AG04449 (cell line): ENCODE measurements at regions of chr17 and their contacts with region 1.

Region 1: DNA sequence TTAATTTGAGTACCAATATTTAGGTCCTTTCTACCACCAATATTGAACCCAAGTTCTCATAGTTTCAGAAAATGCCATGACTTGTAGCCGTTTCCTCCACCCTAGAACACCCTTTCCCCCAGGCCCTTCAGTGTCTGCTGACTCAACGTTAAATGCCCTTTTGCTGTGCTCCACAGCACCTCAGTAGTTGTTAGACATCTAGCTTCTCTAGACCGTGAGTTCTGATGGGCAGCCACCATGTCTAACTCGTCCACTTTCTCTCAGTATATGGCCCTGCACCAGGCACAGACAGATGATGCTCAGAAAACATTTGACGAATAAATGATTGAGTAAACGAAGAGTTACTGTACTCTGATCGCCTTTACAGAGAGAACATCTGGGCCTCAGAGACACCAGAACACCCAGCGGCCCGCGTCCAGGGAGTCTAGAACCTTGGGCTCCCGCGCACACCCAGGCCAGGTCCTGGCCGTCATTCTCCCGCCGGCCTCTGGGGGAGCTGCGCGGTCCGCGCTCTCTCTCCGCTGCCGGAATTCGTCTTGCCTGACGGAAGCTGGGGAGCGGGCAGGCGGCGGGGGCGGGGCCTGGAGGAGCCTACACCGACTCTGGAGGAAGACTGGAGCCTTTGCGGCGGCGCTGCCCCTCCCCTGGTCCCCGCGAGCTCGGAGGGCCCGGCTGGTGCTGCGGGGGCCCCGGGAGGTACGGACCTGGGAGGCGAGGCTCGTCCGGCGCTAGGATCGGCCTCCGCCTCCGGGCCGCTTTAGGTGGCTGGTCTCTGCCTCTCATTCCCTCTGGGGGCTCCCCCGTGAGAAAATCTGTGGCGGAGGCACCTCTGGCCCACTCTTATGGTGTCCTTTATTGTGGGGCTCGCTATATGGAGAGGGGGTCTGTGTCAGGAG is at the start of gene NKIRAS2:
- DNase-seq: no peak
- H3K4me3 ChIP-seq: peak within 1 kb of the TSS; percentile 79
- CTCF ChIP-seq: peak; percentile 97

Region 2: GRCh38 chr17:41930009-41930832 is 89.5 kb before region 1 on chr17 and contains the start of gene ODAD4:
- CTCF ChIA-PET with region 1: no interaction called
- POLR2A ChIA-PET with region 1: no interaction called
- DNase-seq: peak; percentile 73
- H3K4me3 ChIP-seq: peak within 1 kb of the TSS; percentile 72
- CTCF ChIP-seq: peak; percentile 52

Region 3: DNA sequence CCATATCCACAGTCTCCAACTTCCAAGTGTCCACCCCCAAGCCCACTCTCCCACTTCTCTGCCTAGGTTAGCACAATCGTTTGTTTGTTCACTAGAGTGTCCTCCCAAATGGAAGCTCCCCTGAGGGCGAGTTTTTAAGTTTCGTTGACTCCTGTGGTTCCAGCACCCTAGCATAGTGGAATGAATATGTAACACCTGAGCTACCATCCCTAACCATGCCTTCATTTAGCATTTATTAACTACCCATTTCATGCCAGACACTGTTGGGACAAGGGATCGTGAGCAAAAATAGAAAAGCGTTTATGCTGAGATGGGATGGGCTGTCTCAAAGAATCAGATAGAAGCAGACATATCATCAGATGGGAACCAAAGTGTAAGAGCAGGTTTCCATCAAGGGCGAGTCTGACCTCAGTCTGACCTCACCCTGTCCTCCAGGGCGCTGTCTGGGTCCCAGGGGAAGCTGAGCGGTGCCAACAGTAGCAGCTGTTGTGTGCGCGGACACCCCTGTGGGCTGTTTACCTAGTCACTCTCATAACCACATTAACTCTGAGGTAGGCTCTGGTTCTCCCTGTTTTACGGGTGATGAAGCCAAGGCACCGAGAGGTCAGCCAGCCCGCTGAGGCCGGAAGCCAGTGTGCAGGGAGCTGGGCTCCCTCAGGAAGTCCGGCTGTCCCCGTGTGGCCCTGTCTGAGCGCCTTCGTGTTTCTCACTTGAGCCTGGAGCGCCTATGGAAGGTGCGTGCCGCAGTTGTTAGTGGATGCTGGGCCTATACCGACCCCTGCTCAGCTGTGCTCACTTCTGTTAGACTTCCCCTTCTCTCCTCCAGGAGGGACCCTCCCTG is 47.0 kb before region 1 on chr17:
- CTCF ChIA-PET with region 1: interaction called, 46 read pairs
- POLR2A ChIA-PET with region 1: interaction called, 15 read pairs
- DNase-seq: no peak
- H3K4me3 ChIP-seq: no peak overlapping the region
- CTCF ChIP-seq: no peak

Region 4: DNA sequence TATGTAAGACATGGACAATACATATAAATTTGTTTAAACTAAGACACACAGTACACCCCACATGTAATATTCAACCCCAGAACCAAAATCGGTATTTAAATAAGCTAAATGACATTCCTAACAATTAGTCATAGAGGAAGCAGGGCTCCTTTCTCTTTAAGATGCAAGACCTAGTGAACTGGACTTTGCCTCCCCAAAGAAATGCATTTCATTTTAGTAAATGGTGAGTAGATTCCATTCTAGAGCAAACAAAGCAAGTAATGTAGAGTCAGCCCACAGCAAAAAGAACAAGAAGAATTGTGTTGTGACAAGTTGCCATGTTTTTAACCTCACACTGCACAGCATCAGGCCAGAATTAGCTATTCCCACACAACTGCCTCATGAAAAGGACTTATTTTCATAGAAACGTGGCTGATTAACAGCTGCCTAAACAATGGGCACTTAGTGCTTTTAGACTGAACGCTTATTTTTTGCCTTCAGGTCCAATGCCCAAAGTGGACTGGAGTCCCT is 16.9 kb before region 1 on chr17:
- CTCF ChIA-PET with region 1: interaction called, 22 read pairs
- POLR2A ChIA-PET with region 1: no interaction called
- DNase-seq: no peak
- H3K4me3 ChIP-seq: no peak overlapping the region
- CTCF ChIP-seq: no peak

Region 5: GRCh38 chr17:42034059-42034458 is 14.3 kb after region 1 on chr17:
- CTCF ChIA-PET with region 1: interaction called, 83 read pairs
- POLR2A ChIA-PET with region 1: interaction called, 3 read pairs
- DNase-seq: no peak
- H3K4me3 ChIP-seq: no peak overlapping the region
- CTCF ChIP-seq: no peak

Region 6: DNA sequence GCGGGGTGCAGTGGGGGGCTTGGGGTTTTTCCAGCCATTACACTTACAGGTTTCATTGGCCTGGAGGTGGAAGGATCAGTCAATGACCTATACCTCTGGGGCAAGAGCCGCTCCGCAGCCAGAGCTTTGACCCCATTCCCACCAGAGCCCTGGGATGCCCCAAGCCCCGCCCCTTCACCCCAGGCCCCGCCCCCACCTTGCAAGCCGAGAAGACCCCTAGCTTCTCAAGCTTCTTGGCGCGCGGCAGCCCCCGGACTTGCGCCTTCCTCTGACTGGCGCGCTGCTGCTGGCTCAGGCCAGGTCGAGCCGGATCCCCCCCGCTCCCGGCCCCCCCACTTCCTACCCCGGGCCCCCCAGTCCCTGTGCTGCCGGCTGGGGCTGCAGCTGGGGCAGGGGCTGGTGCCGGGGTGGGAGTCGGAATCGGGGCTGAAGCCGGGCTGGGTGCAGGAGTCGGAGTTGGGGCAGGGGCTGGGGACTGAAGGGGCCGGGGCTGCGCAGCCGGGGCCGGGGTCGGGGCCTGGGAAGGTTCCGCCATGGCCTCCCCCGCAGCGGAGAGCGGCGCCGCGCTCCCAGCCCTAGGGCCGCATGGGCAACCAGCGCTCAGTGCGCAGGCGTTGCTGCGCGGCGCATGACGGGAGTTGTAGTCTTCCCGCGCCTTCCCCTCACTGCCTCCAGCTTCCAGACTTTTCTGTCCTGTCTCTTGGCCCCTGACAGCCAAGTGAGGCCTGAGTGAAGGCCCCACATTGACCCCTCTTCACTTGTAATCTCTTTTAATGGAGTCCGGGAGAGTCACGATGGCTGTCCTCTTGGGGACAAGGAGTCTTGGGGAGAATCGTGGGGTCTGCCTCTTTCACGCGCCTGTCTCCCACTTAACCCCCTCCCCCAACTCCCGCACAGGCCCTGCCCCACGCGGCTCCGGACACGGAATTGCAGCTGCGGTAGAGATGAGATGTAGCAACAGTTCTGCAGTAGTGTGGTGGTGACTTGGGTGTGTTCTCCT is 101.3 kb after region 1 on chr17 and contains the start of gene KAT2A:
- CTCF ChIA-PET with region 1: interaction called, 451 read pairs
- POLR2A ChIA-PET with region 1: no interaction called
- DNase-seq: no peak
- H3K4me3 ChIP-seq: peak within 1 kb of the TSS; percentile 62
- CTCF ChIP-seq: no peak